ENCODE measurements at regions of chr7 and their contacts with region 1.

Region 1: GRCh38 chr7:143214789-143215679 is 6.8 kb upstream of the TAS2R40 start:
- DNase-seq: peak; percentile 58 to 79
- H3K4me3 ChIP-seq: no peak overlapping the region
- H3K4me3 Mint-ChIP-seq: no peak overlapping the region
- H3K27ac Mint-ChIP-seq: no peak overlapping the region
- H3K4me1 ChIP-seq: no peaks in the 10 kb centered on the region
- H3K4me1 Mint-ChIP-seq: no peaks in the 10 kb centered on the region
- H3K27me3 ChIP-seq: no peaks in the 10 kb centered on the region
- H3K27me3 Mint-ChIP-seq: peaks cover 7% of the 10 kb centered on the region
- CTCF ChIP-seq: peak; percentile 98 to 100

Region 2: GRCh38 chr7:142880876-142881505 is 334.0 kb before region 1 on chr7:
- CTCF ChIA-PET with region 1: interaction called, 6 read pairs
- POLR2A ChIA-PET with region 1: no interaction called
- intact Hi-C with region 1: loop called (anchors 1 kb)
- DNase-seq: peak; percentile 53 to 54
- H3K4me3 ChIP-seq: no peak overlapping the region
- H3K4me3 Mint-ChIP-seq: no peak overlapping the region
- H3K27ac Mint-ChIP-seq: no peak overlapping the region
- H3K4me1 ChIP-seq: peaks cover 20% of the 10 kb centered on the region
- H3K4me1 Mint-ChIP-seq: no peaks in the 10 kb centered on the region
- H3K27me3 ChIP-seq: no peaks in the 10 kb centered on the region
- H3K27me3 Mint-ChIP-seq: no peaks in the 10 kb centered on the region
- CTCF ChIP-seq: peak; percentile 91 to 92

Region 3: GRCh38 chr7:143008007-143008901 is 206.8 kb before region 1 on chr7:
- CTCF ChIA-PET with region 1: interaction called, 167 read pairs
- POLR2A ChIA-PET with region 1: no interaction called
- intact Hi-C with region 1: loop called (anchors 1 kb)
- DNase-seq: peak; percentile 71 to 85
- H3K4me3 ChIP-seq: no peak overlapping the region
- H3K4me3 Mint-ChIP-seq: no peak overlapping the region
- H3K27ac Mint-ChIP-seq: no peak overlapping the region
- H3K4me1 ChIP-seq: 0 out of 2 replicates have a peak, but pooled peaks cover 2% of the 10 kb centered on the region
- H3K4me1 Mint-ChIP-seq: peaks cover 4% of the 10 kb centered on the region
- H3K27me3 ChIP-seq: no peaks in the 10 kb centered on the region
- H3K27me3 Mint-ChIP-seq: peaks cover 14% of the 10 kb centered on the region
- CTCF ChIP-seq: peak; percentile 97 to 98

Region 4: GRCh38 chr7:143042159-143042789 is 172.8 kb before region 1 on chr7:
- CTCF ChIA-PET with region 1: interaction called, 12 read pairs
- POLR2A ChIA-PET with region 1: no interaction called
- intact Hi-C with region 1: no loop called
- DNase-seq: no peak
- H3K4me3 ChIP-seq: no peak overlapping the region
- H3K4me3 Mint-ChIP-seq: peak overlapping the region; percentile 52
- H3K27ac Mint-ChIP-seq: peak overlapping the region; percentile 79
- H3K4me1 ChIP-seq: peaks cover 42% of the 10 kb centered on the region
- H3K4me1 Mint-ChIP-seq: peaks cover 38% of the 10 kb centered on the region
- H3K27me3 ChIP-seq: no peaks in the 10 kb centered on the region; the same call in 1 of the 2 replicates
- H3K27me3 Mint-ChIP-seq: peaks cover 6% of the 10 kb centered on the region
- CTCF ChIP-seq: no peak

Region 5: GRCh38 chr7:143263266-143264195 is 48.5 kb after region 1 on chr7 and contains the start of gene GSTK1:
- CTCF ChIA-PET with region 1: interaction called, 14 read pairs
- POLR2A ChIA-PET with region 1: no interaction called
- intact Hi-C with region 1: no loop called
- DNase-seq: peak; percentile 84 to 89
- H3K4me3 ChIP-seq: peak within 1 kb of the TSS; percentile 66
- H3K4me3 Mint-ChIP-seq: peak within 1 kb of the TSS; percentile 94
- H3K27ac Mint-ChIP-seq: peak within 1 kb of the TSS; percentile 97
- H3K4me1 ChIP-seq: peaks cover 28% of the 10 kb centered on the region
- H3K4me1 Mint-ChIP-seq: peaks cover 32% of the 10 kb centered on the region
- H3K27me3 ChIP-seq: no peaks in the 10 kb centered on the region
- H3K27me3 Mint-ChIP-seq: no peaks in the 10 kb centered on the region
- CTCF ChIP-seq: no peak
- total RNA-seq, gene GSTK1: 127 and 134 TPM in 2 replicates

Region 6: GRCh38 chr7:143492043-143492471 is 277.0 kb after region 1 on chr7:
- CTCF ChIA-PET with region 1: no interaction called
- POLR2A ChIA-PET with region 1: no interaction called
- intact Hi-C with region 1: no loop called
- DNase-seq: peak in 1 of 2 experiments; percentile 26
- H3K4me3 ChIP-seq: no peak overlapping the region
- H3K4me3 Mint-ChIP-seq: no peak overlapping the region
- H3K27ac Mint-ChIP-seq: no peak overlapping the region
- H3K4me1 ChIP-seq: peaks cover 17% of the 10 kb centered on the region
- H3K4me1 Mint-ChIP-seq: peaks cover 18% of the 10 kb centered on the region
- H3K27me3 ChIP-seq: no peaks in the 10 kb centered on the region
- H3K27me3 Mint-ChIP-seq: no peaks in the 10 kb centered on the region
- CTCF ChIP-seq: no peak